ENCODE measurements at regions of chr10 and their contacts with region 1.

Region 1: GRCh38 chr10:71314028-71314693 is 4.9 kb upstream of the SLC29A3 start:
- DNase-seq: peak in 1 of 2 experiments; percentile 46
- H3K4me3 ChIP-seq: no peak overlapping the region
- H3K27ac ChIP-seq: no peak overlapping the region
- H3K4me1 ChIP-seq: peaks cover 14% of the 10 kb centered on the region
- H3K27me3 ChIP-seq: no peaks in the 10 kb centered on the region
- CTCF ChIP-seq: peak; percentile 91

Region 2: GRCh38 chr10:71116426-71116825 is 197.7 kb before region 1 on chr10:
- CTCF ChIA-PET with region 1: no interaction called
- POLR2A ChIA-PET with region 1: no interaction called
- intact Hi-C with region 1: no loop called
- DNase-seq: no peak
- H3K4me3 ChIP-seq: no peak overlapping the region
- H3K27ac ChIP-seq: no peak overlapping the region
- H3K4me1 ChIP-seq: no peaks in the 10 kb centered on the region
- H3K27me3 ChIP-seq: peaks cover 20% of the 10 kb centered on the region
- CTCF ChIP-seq: no peak

Region 3: GRCh38 chr10:71419750-71420149 is 105.6 kb after region 1 on chr10:
- CTCF ChIA-PET with region 1: no interaction called
- POLR2A ChIA-PET with region 1: no interaction called
- intact Hi-C with region 1: no loop called
- DNase-seq: no peak
- H3K4me3 ChIP-seq: no peak overlapping the region
- H3K27ac ChIP-seq: no peak overlapping the region
- H3K4me1 ChIP-seq: no peaks in the 10 kb centered on the region
- H3K27me3 ChIP-seq: no peaks in the 10 kb centered on the region
- CTCF ChIP-seq: no peak

Region 4: DNA sequence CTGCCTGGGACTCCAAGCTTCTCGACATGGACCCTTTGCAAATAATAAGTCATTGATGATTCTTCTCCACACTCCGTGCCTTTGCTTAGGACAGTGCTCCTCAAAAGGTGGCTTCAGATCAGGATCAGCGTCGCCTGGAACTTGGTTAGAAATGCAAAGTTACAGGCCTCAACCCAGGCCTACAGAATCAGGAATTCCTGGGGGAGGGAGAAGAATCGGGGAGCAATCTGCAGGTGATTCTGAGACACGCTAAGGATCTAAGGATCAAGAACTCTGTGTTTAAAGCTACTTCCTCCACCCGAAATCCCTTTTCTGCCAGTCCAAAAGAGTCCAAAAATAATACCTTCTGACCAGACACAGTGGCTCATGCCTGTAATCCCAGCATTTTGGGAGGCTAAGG is 327.3 kb after region 1 on chr10:
- CTCF ChIA-PET with region 1: interaction called, 10 read pairs
- POLR2A ChIA-PET with region 1: no interaction called
- intact Hi-C with region 1: no loop called
- DNase-seq: no peak
- H3K4me3 ChIP-seq: no peak overlapping the region
- H3K27ac ChIP-seq: no peak overlapping the region
- H3K4me1 ChIP-seq: peaks cover 16% of the 10 kb centered on the region
- H3K27me3 ChIP-seq: no peaks in the 10 kb centered on the region
- CTCF ChIP-seq: no peak

Region 5: GRCh38 chr10:71696628-71697326 is 382.6 kb after region 1 on chr10:
- CTCF ChIA-PET with region 1: interaction called, 6 read pairs
- POLR2A ChIA-PET with region 1: no interaction called
- intact Hi-C with region 1: loop called (anchors 1 kb)
- DNase-seq: peak in 1 of 2 experiments; percentile 68
- H3K4me3 ChIP-seq: no peak overlapping the region
- H3K27ac ChIP-seq: no peak overlapping the region
- H3K4me1 ChIP-seq: peaks cover 27% of the 10 kb centered on the region
- H3K27me3 ChIP-seq: no peaks in the 10 kb centered on the region
- CTCF ChIP-seq: peak; percentile 98

Region 6: GRCh38 chr10:71708301-71708703 is 394.1 kb after region 1 on chr10:
- CTCF ChIA-PET with region 1: interaction called, 4 read pairs
- POLR2A ChIA-PET with region 1: no interaction called
- intact Hi-C with region 1: loop called (anchors 1 kb)
- DNase-seq: peak in 1 of 2 experiments; percentile 69
- H3K4me3 ChIP-seq: no peak overlapping the region
- H3K27ac ChIP-seq: no peak overlapping the region
- H3K4me1 ChIP-seq: peaks cover 6% of the 10 kb centered on the region; the same call in 1 of the 2 replicates
- H3K27me3 ChIP-seq: no peaks in the 10 kb centered on the region
- CTCF ChIP-seq: peak; percentile 97

Region 7: DNA sequence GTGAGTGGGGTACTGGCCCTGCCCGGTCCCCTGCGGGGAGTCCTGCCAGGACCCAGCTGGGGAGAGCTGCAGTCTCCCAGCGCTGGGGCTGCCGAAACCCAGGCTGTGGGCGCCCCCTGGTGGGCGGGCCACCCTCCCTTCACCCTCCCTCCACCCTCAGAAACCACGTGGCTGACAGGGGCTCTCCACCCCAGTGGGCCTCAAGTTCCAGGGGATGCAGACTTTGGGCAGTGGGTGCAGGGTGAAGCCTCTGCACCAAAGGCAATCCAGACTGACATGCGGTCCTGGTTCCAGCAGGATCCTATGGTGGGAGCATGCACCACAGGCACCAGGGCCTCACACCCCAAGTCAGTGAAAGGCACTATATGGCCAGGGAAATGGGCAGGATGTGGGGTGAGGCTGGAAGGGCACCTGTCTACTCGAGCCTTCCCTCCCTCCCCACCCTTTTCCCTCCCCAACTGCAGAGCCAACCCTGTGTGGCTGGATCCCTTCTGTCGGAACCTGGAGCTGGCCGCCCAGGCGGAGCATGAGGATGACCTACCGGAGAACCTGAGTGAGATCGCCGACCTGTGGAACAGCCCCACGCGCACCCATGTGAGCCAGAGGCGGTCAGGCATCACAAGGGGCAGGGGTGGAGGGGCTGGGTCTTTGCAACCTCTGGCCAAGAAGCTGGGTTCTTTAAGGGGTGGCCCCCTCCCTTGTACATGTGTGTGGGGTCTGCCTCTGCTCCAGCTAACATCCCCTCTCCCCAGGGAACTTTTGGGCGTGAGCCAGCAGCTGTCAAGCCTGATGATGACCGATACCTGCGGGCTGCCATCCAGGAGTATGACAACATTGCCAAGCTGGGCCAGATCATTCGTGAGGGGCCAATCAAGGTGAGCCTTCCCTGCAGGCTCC is 498.1 kb after region 1 on chr10:
- CTCF ChIA-PET with region 1: no interaction called
- POLR2A ChIA-PET with region 1: no interaction called
- intact Hi-C with region 1: loop called (anchors 5 kb)
- DNase-seq: peak; percentile 31 to 71
- H3K4me3 ChIP-seq: no peak overlapping the region
- H3K27ac ChIP-seq: no peak overlapping the region
- H3K4me1 ChIP-seq: no peaks in the 10 kb centered on the region
- H3K27me3 ChIP-seq: no peaks in the 10 kb centered on the region
- CTCF ChIP-seq: peak; percentile 90

Region 8: GRCh38 chr10:71893920-71894319 is 579.8 kb after region 1 on chr10:
- CTCF ChIA-PET with region 1: no interaction called
- POLR2A ChIA-PET with region 1: no interaction called
- intact Hi-C with region 1: loop called (anchors 1 kb)
- DNase-seq: no peak
- H3K4me3 ChIP-seq: no peak overlapping the region
- H3K27ac ChIP-seq: no peak overlapping the region
- H3K4me1 ChIP-seq: peaks cover 16% of the 10 kb centered on the region
- H3K27me3 ChIP-seq: no peaks in the 10 kb centered on the region
- CTCF ChIP-seq: no peak

Region 9: DNA sequence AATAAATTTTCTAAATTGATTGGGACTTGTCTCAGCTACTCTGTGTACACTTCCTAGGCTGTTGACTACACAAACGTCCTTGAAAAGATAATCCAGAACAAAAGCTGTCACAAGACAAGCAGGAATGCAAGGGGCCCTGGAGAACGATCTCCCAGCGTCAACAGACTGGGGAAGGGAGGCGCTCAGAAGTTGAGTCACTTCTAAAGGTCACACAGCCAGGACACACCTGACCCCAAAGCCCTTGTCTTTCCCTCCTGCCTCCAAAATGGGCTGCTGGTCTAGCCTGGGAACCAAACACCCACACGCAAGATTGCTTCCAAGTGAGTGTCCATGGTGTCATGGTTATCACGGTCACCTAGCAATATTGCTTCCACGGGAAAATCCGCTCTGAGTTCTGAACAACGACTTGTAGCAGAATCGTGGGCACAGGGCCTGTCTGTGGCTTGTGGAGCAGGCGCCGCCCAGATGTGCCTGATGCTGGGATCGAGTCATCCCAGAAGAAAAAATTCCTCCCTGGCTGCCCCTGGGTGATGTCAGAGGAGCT is 724.4 kb after region 1 on chr10:
- CTCF ChIA-PET with region 1: no interaction called
- POLR2A ChIA-PET with region 1: interaction called, 13 read pairs
- intact Hi-C with region 1: no loop called
- DNase-seq: no peak
- H3K4me3 ChIP-seq: no peak overlapping the region
- H3K27ac ChIP-seq: no peak overlapping the region
- H3K4me1 ChIP-seq: peaks cover 22% of the 10 kb centered on the region
- H3K27me3 ChIP-seq: no peaks in the 10 kb centered on the region
- CTCF ChIP-seq: no peak

Measured in PC-9 (cell line).